Caco-2 (cell line): ENCODE measurements at regions of chrX and their contacts with region 1.

Region 1: DNA sequence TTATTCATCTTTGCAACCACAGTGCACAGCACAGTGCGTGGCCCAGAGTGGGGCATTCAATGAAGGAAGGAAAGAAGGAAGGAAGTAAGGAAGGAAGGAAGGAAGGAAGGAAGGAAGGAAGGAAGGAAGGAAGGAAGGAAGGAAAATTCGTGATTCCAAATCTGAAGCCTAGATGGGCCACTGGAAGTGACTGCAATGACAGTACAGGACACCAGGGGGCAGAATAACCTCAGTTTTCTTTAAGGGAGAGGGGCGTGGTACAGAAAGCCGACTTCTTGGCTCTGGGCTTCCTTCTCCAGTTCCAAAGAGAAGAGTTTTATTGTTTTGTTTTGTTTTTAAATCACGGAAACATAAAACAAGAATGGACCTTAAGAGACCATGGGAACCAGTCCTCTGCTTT is 47.8 kb downstream of the APLN start:
- DNase-seq: peak in 1 of 2 experiments; percentile 61
- H3K4me3 ChIP-seq: no peak overlapping the region
- H3K4me3 Mint-ChIP-seq: no peak overlapping the region
- H3K27ac Mint-ChIP-seq: no peak overlapping the region
- H3K4me1 ChIP-seq: peaks cover 11% of the 10 kb centered on the region
- H3K4me1 Mint-ChIP-seq: peaks cover 6% of the 10 kb centered on the region
- H3K27me3 ChIP-seq: no peaks in the 10 kb centered on the region
- H3K27me3 Mint-ChIP-seq: no peaks in the 10 kb centered on the region
- CTCF ChIP-seq: peak; percentile 30 to 61

Region 2: GRCh38 chrX:129577473-129577872 is 29.4 kb before region 1 on chrX:
- CTCF ChIA-PET with region 1: no interaction called
- POLR2A ChIA-PET with region 1: no interaction called
- intact Hi-C with region 1: no loop called
- DNase-seq: no peak
- H3K4me3 ChIP-seq: no peak overlapping the region
- H3K4me3 Mint-ChIP-seq: no peak overlapping the region
- H3K27ac Mint-ChIP-seq: no peak overlapping the region
- H3K4me1 ChIP-seq: no peaks in the 10 kb centered on the region
- H3K4me1 Mint-ChIP-seq: no peaks in the 10 kb centered on the region
- H3K27me3 ChIP-seq: no peaks in the 10 kb centered on the region
- H3K27me3 Mint-ChIP-seq: no peaks in the 10 kb centered on the region
- CTCF ChIP-seq: no peak

Region 3: DNA sequence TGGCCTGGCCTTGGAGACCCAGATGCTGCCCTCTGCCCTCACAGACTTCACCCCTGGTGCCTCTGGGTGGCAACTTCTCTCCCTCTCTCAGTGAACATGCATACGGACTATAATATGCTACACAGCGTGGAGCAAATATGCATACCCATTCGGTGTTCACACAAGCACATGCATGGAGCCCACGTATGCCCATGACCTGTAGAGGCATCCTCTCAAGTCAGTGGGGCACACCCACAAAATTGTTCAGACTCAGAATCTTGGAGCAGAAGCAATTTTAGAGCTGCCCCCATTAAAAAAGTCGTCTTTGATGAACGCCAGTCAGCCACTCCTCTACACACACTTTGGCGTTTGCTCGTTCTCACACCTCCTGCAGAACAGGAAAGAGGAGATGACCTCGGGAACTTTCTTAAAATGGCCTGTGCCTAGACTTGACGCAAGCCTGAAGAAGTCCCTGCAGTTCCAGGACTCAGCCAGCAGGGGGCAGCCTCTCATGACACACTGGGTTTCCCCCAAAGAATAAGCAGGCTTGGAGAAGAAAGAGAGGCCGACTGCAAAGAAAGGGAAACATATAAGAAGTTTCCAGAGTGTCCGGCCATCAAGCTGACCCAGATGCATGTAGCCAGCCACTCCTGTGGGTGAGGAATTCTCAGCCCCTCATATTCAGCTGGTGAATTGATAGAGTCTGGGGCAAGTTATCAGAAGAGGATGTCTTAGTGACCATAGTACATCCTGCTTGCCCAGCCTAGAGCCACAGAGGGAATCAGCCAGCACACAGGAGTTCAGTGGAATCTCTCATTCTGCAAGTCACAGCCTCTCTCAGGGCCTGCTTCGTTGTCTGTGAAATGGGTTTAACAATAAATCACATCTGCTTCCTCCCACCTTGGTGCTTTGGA is 30.5 kb after region 1 on chrX:
- CTCF ChIA-PET with region 1: interaction called, 5 read pairs
- POLR2A ChIA-PET with region 1: no interaction called
- intact Hi-C with region 1: loop called (anchors 1 kb)
- DNase-seq: peak; percentile 51 to 57
- H3K4me3 ChIP-seq: no peak overlapping the region
- H3K4me3 Mint-ChIP-seq: no peak overlapping the region
- H3K27ac Mint-ChIP-seq: no peak overlapping the region
- H3K4me1 ChIP-seq: no peaks in the 10 kb centered on the region
- H3K4me1 Mint-ChIP-seq: no peaks in the 10 kb centered on the region
- H3K27me3 ChIP-seq: no peaks in the 10 kb centered on the region
- H3K27me3 Mint-ChIP-seq: no peaks in the 10 kb centered on the region
- CTCF ChIP-seq: peak; percentile 74 to 85

Region 4: DNA sequence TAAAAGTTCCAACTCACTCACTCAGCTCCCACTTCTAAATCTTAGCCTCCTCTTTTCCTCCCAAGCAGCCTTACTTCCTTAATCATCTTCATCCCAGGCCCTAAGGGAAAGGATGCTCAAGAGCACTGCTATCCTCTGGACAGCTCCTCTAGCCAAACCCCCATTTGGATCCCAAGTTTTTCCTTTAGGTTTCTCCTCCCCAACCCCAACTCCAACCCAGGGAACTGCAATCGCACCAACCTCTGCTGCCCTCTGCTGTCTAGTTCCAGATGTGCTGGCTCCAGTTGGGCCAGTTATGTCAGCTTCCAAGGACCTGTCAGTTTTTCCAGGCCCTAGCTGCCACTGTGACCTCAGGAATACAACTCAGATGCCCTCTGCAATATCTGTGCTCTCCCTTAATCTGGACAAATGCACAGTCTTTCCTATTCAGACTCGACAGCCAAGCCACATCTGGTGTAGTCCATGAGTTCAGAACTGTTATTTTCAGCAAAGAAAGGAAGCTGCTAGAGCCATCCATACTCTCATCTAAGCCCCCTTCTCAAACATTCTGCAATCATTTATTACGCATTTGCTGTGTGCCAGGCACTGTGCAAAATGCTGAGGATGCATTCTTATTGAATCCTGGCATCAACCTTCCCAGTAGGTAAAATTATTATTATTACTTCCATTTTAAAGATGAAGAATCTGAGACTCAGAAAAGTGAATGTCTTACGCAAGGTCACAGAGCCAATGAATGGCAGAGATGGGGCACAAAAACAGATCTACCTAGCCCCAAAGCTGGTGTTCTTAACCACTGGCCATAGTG is 119.6 kb after region 1 on chrX:
- CTCF ChIA-PET with region 1: interaction called, 12 read pairs
- POLR2A ChIA-PET with region 1: no interaction called
- intact Hi-C with region 1: loop called (anchors 1 kb)
- DNase-seq: peak; percentile 55 to 75
- H3K4me3 ChIP-seq: no peak overlapping the region
- H3K4me3 Mint-ChIP-seq: no peak overlapping the region
- H3K27ac Mint-ChIP-seq: no peak overlapping the region
- H3K4me1 ChIP-seq: no peaks in the 10 kb centered on the region
- H3K4me1 Mint-ChIP-seq: peaks cover 6% of the 10 kb centered on the region
- H3K27me3 ChIP-seq: no peaks in the 10 kb centered on the region
- H3K27me3 Mint-ChIP-seq: peaks cover 3% of the 10 kb centered on the region
- CTCF ChIP-seq: peak; percentile 55 to 77

Region 5: GRCh38 chrX:129905787-129906580 is 299.1 kb after region 1 on chrX and contains the start of gene UTP14A:
- CTCF ChIA-PET with region 1: no interaction called
- POLR2A ChIA-PET with region 1: no interaction called
- intact Hi-C with region 1: loop called (anchors 10 kb)
- DNase-seq: peak; percentile 88 to 93
- H3K4me3 ChIP-seq: peak within 1 kb of the TSS; percentile 75
- H3K4me3 Mint-ChIP-seq: peak within 1 kb of the TSS; percentile 86
- H3K27ac Mint-ChIP-seq: peak within 1 kb of the TSS; percentile 86
- H3K4me1 ChIP-seq: no peaks in the 10 kb centered on the region
- H3K4me1 Mint-ChIP-seq: no peaks in the 10 kb centered on the region
- H3K27me3 ChIP-seq: no peaks in the 10 kb centered on the region
- H3K27me3 Mint-ChIP-seq: no peaks in the 10 kb centered on the region
- CTCF ChIP-seq: no peak
- total RNA-seq, gene UTP14A: 24.5 and 24.6 TPM in 2 replicates

Region 6: GRCh38 chrX:130028196-130028595 is 421.3 kb after region 1 on chrX:
- CTCF ChIA-PET with region 1: no interaction called
- POLR2A ChIA-PET with region 1: no interaction called
- intact Hi-C with region 1: loop called (anchors 5 kb)
- DNase-seq: peak in 1 of 2 experiments; percentile 56
- H3K4me3 ChIP-seq: no peak overlapping the region
- H3K4me3 Mint-ChIP-seq: no peak overlapping the region
- H3K27ac Mint-ChIP-seq: no peak overlapping the region
- H3K4me1 ChIP-seq: no peaks in the 10 kb centered on the region
- H3K4me1 Mint-ChIP-seq: no peaks in the 10 kb centered on the region
- H3K27me3 ChIP-seq: no peaks in the 10 kb centered on the region
- H3K27me3 Mint-ChIP-seq: no peaks in the 10 kb centered on the region
- CTCF ChIP-seq: peak; percentile 43 to 70